Esophagus squamous epithelium (tissue), 5 donors: ENCODE measurements at regions of chr3 and their contacts with region 1.

Region 1: DNA sequence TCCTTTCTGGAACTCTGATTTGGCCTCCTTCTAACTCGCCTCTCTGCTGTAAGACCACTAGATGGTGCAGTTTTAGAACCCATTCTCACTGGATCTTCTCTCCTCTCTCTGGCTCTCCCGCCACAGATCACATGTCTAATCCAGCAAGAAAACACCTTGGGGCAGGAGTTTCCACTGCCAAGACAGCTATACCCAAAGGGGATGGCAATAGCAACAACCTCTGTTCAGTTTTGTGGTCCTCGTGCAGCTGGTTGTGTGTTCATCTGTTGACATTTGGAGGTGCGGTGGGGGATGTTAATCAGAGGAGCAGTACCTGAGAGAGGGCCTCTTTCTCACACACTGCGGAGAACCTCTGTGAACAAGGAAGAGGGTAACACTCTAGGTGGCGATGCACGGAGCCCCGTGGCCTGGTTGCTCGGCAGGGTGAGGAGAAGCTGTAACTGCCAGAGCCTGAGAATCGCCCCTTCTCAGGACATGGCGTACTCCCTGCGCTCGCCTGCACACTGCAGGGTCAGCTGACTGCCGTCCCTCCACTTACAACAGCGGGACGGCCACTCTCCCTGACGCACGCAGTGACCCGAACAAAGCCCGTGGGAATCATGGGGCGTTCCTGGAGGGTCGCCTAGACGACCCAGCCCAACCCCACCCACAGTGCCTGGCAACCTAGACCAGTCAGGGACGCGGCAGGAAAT is at the start of gene TEX55:
- DNase-seq: no peak
- H3K4me3 ChIP-seq: no peak within 1 kb of the TSS
- H3K27ac ChIP-seq: no peak within 1 kb of the TSS
- H3K4me1 ChIP-seq: peaks cover 0 to 4% (median 0%) of the 10 kb centered on the region in 3 donors
- H3K27me3 ChIP-seq: no peaks in the 10 kb centered on the region
- CTCF ChIP-seq: peak in 5 of 6 experiments; percentile 40 to 64 (median 42)
- POLR2A ChIP-seq: no peak
- total RNA-seq, gene TEX55: not detected

Region 2: DNA sequence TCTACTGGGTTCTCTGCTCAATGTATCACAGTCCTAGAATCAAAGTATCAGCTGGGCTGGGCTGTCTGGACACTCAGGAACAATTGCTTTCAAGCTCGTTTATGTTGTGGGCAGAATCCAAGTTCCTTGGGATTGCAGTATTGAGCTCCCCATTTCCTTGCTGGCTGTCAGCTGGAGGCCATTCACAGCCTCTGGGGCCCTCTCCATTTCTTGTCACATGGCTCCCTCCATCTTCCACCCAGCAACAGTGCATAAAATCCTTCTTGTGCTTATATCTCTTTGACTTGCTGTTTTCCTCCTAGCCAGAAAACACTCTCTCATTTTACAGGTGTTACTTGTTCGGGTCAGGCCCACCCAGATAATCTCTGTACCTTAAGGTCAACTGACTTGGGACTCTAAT is 474.5 kb before region 1 on chr3:
- intact Hi-C with region 1: no loop called
- DNase-seq: no peak
- H3K4me3 ChIP-seq: no peak overlapping the region
- H3K27ac ChIP-seq: no peak overlapping the region
- H3K4me1 ChIP-seq: no peaks in the 10 kb centered on the region
- H3K27me3 ChIP-seq: no peaks in the 10 kb centered on the region
- CTCF ChIP-seq: no peak
- POLR2A ChIP-seq: no peak

Region 3: DNA sequence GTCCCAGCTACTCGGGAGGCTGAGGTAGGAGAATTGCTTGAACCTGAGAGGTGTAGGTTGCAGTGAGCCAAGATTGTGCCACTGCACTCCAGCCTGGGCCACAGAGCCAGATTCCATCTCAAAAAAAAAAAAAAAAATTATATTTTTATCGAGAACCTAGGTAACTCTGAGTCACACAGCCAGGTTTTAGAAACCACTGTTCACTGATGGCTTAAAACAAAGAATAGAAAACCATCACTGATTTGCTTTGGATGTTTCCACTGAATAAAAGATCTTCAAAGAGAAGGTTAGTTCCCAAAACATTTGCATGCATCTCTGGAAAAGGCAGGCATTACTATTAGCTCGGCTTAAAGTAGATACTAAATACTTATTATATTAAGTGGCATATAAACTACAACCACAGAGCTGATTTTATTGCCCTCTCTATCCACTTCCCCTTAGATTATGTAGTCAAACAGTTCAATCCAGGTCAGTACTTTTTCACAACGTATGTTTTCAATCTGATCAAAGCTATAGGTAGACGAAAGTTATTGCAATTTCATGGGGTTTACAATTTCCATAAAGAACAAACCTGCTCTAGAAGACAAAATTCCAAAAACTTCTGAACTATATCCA is 93.7 kb after region 1 on chr3:
- intact Hi-C with region 1: loop called (anchors 10 kb)
- DNase-seq: no peak
- H3K4me3 ChIP-seq: peak overlapping the region; percentile 66 to 98 (median 84)
- H3K27ac ChIP-seq: peak overlapping the region in 3 of 4 donors; percentile 90 to 96 (median 96)
- H3K4me1 ChIP-seq: peaks cover 4 to 47% (median 21%) of the 10 kb centered on the region in 3 donors
- H3K27me3 ChIP-seq: no peaks in the 10 kb centered on the region
- CTCF ChIP-seq: no peak
- POLR2A ChIP-seq: no peak

Region 4: DNA sequence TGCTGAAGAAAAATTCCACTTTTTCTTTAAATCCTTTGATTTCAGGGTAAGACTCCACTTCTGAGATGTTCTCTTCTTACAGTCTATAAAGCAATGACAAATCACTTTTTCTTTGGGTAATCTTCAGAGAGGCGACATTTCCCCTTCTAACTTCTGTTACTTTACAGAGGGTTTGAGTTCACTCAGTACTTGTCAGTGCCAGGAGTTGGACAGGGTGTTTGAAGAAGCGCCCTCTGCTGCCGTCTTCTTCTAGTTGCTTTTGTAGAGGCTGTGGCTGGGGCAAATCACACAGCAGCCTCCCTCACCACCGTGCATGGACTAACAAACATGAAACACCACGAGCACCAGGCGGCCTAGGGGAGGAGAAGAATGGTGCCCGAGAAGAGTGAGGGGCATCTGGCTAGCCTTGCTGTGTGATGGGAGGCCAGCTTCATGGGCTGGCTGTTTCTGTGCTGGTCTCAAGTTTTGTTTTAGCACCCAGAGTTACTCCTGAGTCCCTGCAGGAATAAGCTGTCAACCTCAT is 413.9 kb after region 1 on chr3 and contains the start of gene CD80:
- intact Hi-C with region 1: no loop called
- DNase-seq: peak; percentile 30
- H3K4me3 ChIP-seq: peak within 1 kb of the TSS in 1 of 4 donors; percentile 37
- H3K27ac ChIP-seq: no peak within 1 kb of the TSS
- H3K4me1 ChIP-seq: no peaks in the 10 kb centered on the region
- H3K27me3 ChIP-seq: no peaks in the 10 kb centered on the region
- CTCF ChIP-seq: peak in 4 of 6 experiments; percentile 17 to 34 (median 24)
- POLR2A ChIP-seq: no peak
- total RNA-seq, gene CD80: 0.13 to 1.3 TPM in 2 of 4 donors, not detected in the others